ENCODE measurements at regions of chr17 and their contacts with region 1.

Region 1: GRCh38 chr17:60704170-60704569 is 26.5 kb downstream of the BCAS3 start:
- DNase-seq: no peak
- ATAC-seq: no peak
- H3K4me3 ChIP-seq: no peak overlapping the region
- H3K4me3 Mint-ChIP-seq: no peak overlapping the region
- H3K27ac ChIP-seq: no peak overlapping the region
- H3K27ac Mint-ChIP-seq: no peak overlapping the region
- H3K4me1 ChIP-seq: no peaks in the 10 kb centered on the region
- H3K4me1 Mint-ChIP-seq: no peaks in the 10 kb centered on the region
- H3K27me3 ChIP-seq: no peaks in the 10 kb centered on the region
- H3K27me3 Mint-ChIP-seq: no peaks in the 10 kb centered on the region

Region 2: DNA sequence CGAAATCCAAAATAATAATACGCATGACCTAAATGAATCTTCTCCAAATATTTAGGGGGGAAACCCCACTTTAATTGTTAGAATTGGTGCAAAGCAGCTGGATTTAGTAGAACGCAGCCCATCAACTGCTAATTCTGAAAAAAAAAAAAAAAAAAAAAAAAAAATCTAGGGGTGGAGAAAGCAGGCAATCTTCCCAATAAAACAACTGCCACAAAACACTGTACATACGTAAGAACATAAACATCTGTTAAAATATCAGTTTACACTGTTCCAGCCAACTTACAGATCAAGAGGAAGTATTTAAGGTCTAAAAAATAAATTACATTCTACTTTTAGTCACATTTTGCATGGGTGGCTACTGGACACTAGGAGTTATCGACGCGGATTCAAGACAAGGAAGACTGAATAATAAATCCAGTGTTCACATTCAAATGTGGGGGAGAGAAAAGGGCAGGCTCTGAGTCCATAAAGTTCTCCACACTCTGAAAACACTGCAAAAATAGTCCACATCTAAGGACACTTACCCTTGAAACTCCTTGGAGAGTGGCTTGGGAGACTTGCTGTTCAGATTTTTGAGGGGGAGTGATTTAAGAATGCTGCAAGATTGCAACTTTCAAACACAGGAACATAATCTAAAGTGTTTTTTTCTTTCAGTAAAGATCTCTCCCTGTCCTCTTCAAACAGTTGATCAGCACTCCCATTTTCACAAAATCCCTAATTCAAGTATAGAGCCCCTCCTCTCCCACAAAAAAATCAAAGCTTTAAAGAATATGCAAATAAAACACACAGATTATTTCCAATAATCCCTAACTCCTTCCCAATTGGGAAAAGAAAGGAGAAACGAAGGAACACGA is 179.5 kb before region 1 on chr17:
- CTCF ChIA-PET with region 1: no interaction called
- POLR2A ChIA-PET with region 1: interaction called in 1 of 2 experiments, 16 read pairs
- DNase-seq: no peak
- ATAC-seq: no peak
- H3K4me3 ChIP-seq: peak overlapping the region; percentile 96 to 97
- H3K4me3 Mint-ChIP-seq: peak overlapping the region; percentile 97 to 100 (median 98)
- H3K27ac ChIP-seq: peak overlapping the region; percentile 7
- H3K27ac Mint-ChIP-seq: peak overlapping the region; percentile 98
- H3K4me1 ChIP-seq: peaks cover 11 to 13% of the 10 kb centered on the region in 2 experiments
- H3K4me1 Mint-ChIP-seq: peaks cover 55 to 56% (median 56%) of the 10 kb centered on the region in 3 donors
- H3K27me3 ChIP-seq: peaks cover 0 to 4% of the 10 kb centered on the region in 2 experiments
- H3K27me3 Mint-ChIP-seq: no peaks in the 10 kb centered on the region

Region 3: DNA sequence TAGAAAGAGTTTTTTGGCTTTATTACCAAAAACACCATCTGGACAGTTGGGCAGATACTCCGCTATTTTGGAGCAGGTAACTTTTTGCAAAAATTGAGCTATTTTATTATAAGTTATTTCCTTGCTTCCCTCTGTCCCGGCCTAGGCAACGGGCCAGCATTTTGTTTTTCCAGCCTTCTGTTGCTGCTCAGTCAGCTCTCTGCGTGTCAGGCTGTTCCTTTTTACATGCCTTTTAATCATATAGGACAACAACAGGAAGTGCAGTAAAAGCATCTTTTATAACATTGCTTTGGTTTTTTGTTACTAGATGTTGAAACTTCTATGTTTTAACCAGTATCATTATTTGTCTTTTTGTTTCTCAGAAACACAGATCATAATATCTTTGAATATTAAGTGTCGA is 73.8 kb before region 1 on chr17:
- CTCF ChIA-PET with region 1: no interaction called
- POLR2A ChIA-PET with region 1: no interaction called
- DNase-seq: no peak
- ATAC-seq: no peak
- H3K4me3 ChIP-seq: no peak overlapping the region
- H3K4me3 Mint-ChIP-seq: no peak overlapping the region
- H3K27ac ChIP-seq: no peak overlapping the region
- H3K27ac Mint-ChIP-seq: peak overlapping the region; percentile 40 to 83
- H3K4me1 ChIP-seq: peaks cover 0 to 2% of the 10 kb centered on the region in 2 experiments
- H3K4me1 Mint-ChIP-seq: peaks cover 8 to 13% (median 11%) of the 10 kb centered on the region in 3 donors
- H3K27me3 ChIP-seq: no peaks in the 10 kb centered on the region
- H3K27me3 Mint-ChIP-seq: no peaks in the 10 kb centered on the region